Naive thymus-derived CD4-positive, alpha-beta T cell (primary cell): ENCODE measurements at regions of chr9 and their contacts with region 1.

Region 1: DNA sequence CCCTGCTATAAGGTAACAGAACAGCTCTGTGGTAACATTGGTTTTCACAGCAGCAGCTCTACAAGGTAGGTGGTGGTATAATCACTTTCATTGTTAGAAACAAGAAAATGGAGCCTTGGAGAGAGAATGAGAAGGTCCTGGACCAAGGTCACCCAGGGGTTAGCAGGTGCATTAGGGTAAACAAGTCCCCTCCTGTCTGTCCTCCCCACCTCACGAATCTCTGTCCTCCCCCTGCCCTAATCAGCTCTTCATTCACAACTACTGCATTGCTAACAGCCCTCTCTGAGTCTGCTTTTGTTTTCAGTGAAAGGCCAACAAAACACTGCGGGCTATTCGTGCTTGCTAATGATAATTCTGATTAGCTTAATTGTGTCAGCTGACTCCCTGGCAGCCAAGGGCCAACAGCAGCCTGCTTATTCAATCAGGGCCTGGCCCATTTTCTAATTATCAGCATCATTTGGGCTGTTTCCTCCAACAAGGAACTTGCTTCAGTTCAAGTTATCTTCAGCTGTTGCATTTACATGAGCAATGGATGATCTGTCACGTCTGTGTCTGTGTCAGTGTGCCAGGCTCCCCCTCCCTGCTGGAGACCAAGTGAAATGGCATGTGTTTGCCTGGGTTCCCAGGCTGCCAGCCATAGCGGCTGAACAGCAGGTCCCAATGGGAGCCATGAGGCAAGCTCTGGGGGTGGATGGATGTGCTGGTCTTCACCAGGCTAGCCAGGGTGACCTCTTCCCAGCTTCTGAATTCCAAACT is 56.7 kb upstream of the EQTN start:
- DNase-seq: no peak
- ATAC-seq: no peak
- H3K4me3 ChIP-seq: no peak overlapping the region
- H3K4me3 Mint-ChIP-seq: no peak overlapping the region
- H3K27ac ChIP-seq: no peak overlapping the region
- H3K27ac Mint-ChIP-seq: peak overlapping the region in 1 of 9 donors; percentile 62
- H3K4me1 ChIP-seq: no peaks in the 10 kb centered on the region
- H3K4me1 Mint-ChIP-seq: peaks cover 0 to 48% (median 8%) of the 10 kb centered on the region in 7 donors
- H3K27me3 ChIP-seq: no peaks in the 10 kb centered on the region
- H3K27me3 Mint-ChIP-seq: no peaks in the 10 kb centered on the region

Region 2: GRCh38 chr9:27377811-27378456 is 24.3 kb after region 1 on chr9:
- CTCF ChIA-PET with region 1: no interaction called
- POLR2A ChIA-PET with region 1: no interaction called
- intact Hi-C with region 1: loop called in 1 of 2 experiments (anchors 2 kb)
- DNase-seq: no peak
- ATAC-seq: peak; percentile 64
- H3K4me3 ChIP-seq: no peak overlapping the region
- H3K4me3 Mint-ChIP-seq: no peak overlapping the region
- H3K27ac ChIP-seq: no peak overlapping the region
- H3K27ac Mint-ChIP-seq: peak overlapping the region in 1 of 9 donors; percentile 20
- H3K4me1 ChIP-seq: no peaks in the 10 kb centered on the region
- H3K4me1 Mint-ChIP-seq: peaks cover 4 to 31% (median 5%) of the 10 kb centered on the region in 7 donors
- H3K27me3 ChIP-seq: no peaks in the 10 kb centered on the region
- H3K27me3 Mint-ChIP-seq: peaks cover 0 to 9% (median 0%) of the 10 kb centered on the region in 5 donors

Region 3: DNA sequence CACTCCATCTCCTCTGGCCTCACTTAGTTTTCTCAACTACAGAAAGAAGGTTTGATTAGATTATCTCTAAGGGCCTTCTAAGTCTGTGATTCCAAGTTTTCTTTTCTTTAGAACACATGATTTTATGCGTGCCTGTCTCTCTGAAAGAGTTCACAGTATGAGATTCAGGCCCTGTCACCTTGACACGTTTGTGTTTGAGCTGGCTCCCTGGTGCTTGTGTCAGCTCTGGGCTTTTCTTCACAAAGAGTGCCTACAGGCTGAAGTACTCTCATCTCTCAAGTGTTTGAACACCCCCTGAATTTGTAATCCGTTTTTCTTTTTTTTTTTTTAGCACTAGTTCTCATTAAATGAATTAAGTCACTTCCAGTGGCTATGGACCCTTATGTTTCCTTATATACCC is 526.5 kb after region 1 on chr9:
- CTCF ChIA-PET with region 1: no interaction called
- POLR2A ChIA-PET with region 1: no interaction called
- intact Hi-C with region 1: no loop called
- DNase-seq: no peak
- ATAC-seq: no peak
- H3K4me3 ChIP-seq: no peak overlapping the region
- H3K4me3 Mint-ChIP-seq: no peak overlapping the region
- H3K27ac ChIP-seq: no peak overlapping the region
- H3K27ac Mint-ChIP-seq: no peak overlapping the region
- H3K4me1 ChIP-seq: no peaks in the 10 kb centered on the region
- H3K4me1 Mint-ChIP-seq: no peaks in the 10 kb centered on the region
- H3K27me3 ChIP-seq: no peaks in the 10 kb centered on the region
- H3K27me3 Mint-ChIP-seq: peaks cover 0 to 5% (median 3%) of the 10 kb centered on the region in 5 donors

Region 4: DNA sequence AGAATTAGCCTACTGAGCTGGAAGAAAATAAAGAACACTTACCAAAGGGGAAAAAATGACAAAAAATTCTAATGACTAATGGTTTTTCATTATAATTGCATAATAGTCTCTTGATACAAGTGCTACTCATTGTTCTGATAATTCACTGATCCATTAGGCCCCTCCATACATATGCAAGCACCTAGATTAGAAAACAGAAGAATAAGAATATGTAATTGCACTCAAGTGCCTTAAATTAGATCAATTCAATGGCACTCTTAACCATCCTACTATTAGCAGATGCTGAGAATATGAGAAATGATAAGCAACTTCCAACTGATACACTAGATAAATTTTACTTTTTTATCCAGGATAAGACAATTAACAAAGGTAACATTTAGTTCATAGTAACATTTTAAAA is 660.6 kb after region 1 on chr9:
- CTCF ChIA-PET with region 1: no interaction called
- POLR2A ChIA-PET with region 1: no interaction called
- intact Hi-C with region 1: no loop called
- DNase-seq: no peak
- ATAC-seq: no peak
- H3K4me3 ChIP-seq: no peak overlapping the region
- H3K4me3 Mint-ChIP-seq: no peak overlapping the region
- H3K27ac ChIP-seq: no peak overlapping the region
- H3K27ac Mint-ChIP-seq: no peak overlapping the region
- H3K4me1 ChIP-seq: no peaks in the 10 kb centered on the region
- H3K4me1 Mint-ChIP-seq: no peaks in the 10 kb centered on the region
- H3K27me3 ChIP-seq: no peaks in the 10 kb centered on the region
- H3K27me3 Mint-ChIP-seq: peaks cover 0 to 5% (median 0%) of the 10 kb centered on the region in 5 donors